ENCODE measurements at regions of chr5 and their contacts with region 1.

Region 1: GRCh38 chr5:71475788-71476384 is 20.4 kb downstream of the BDP1 start:
- DNase-seq: peak; percentile 52
- CTCF ChIP-seq: peak; percentile 56

Region 2: DNA sequence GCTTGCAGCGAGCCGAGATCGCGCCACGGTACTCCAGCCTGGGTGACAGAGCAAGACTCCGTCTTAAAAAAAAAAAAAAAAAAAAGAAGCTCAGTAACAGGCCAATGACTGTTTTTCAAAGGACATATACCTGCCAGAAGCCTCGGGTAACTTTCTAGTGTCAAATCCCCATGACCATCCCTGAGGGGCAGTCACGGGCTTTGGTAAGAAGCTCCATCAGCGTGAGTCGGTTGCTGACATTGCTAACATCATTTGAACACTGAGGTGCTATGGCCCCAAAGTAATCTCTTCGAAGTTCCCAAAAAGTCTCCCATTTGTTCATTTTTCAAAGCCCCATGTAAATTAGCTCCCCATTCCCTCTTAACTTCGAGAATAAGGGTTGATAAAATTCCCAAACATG is 462.3 kb before region 1 on chr5:
- CTCF ChIA-PET with region 1: no interaction called
- POLR2A ChIA-PET with region 1: no interaction called
- DNase-seq: no peak
- CTCF ChIP-seq: no peak

Region 3: DNA sequence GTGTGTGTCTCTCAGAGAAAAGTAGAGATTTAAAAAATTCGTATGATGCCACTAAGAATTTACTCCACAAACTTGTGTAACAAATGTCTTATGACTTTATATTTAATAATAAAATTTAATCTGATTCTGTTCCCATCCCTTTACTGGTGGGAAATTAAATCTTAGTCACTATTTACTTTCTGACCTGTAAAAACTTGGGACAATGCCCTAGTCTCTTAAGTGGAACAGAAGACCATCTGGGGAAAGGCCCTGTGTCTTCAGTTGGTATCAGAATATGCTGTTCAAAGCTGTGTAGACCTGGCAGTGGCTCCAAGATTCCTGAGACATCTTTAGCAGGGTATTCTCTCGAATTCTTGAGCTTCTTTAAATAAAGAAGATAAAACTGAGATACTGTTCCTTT is 23.0 kb before region 1 on chr5:
- CTCF ChIA-PET with region 1: interaction called, 10 read pairs
- POLR2A ChIA-PET with region 1: interaction called, 4 read pairs
- DNase-seq: no peak
- CTCF ChIP-seq: no peak

Region 4: DNA sequence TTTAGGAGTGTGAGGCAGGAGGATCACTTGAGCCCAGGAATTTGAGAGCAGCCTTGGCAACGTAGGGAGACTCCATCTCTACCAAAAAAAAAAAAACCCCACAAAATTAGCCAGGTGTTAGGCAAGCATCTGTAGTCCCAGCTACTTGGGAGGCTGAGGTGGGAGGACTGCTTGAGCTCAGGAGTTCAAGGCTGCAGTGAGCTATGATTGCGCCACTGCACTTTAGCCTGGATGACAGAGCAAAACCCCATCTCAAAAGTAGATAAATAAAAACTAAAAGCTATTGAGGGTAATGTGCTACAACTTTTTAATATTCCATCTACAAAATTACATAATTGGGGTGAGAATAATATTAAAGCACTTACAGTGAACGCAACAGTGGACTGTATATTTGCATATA is 14.5 kb before region 1 on chr5:
- CTCF ChIA-PET with region 1: interaction called, 35 read pairs
- POLR2A ChIA-PET with region 1: interaction called, 4 read pairs
- DNase-seq: no peak
- CTCF ChIP-seq: no peak

Region 5: DNA sequence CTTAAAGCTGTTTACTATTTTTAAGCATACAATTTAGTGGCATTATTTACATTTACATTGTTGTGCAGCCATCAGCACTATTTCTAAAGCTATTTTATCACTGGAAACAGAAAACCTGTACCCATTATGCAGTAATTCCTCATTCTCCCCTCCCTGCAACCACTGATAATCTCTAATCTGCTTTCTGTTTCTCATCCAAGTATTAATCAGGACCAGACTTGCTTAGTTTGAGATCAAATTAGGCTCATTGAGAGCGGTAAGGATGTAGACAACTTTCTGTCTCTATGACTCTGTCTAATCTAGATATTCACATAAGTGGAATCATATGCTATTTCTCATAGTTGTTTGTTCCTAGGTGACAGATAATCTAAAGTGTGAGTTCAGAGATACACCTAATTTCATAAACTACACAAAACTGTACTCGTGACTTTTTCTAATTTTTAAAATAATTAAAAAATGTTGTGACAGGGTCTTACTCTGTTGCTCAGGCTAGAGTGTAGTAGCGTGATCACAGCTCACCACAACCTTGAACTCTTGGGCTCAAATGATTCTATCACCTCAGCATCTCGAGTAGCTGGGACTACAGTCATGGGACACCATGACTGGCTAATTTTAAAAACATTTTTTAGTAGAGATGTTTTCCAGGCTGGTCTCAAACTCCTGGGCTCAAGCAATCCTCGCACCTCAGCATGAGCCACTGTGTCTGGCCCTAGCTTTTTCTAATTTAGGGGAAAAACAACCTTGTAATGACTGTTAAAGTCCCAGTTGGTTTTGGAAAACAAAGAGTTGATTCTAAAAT is 17.1 kb after region 1 on chr5:
- CTCF ChIA-PET with region 1: interaction called, 36 read pairs
- POLR2A ChIA-PET with region 1: no interaction called
- DNase-seq: no peak
- CTCF ChIP-seq: no peak

Region 6: DNA sequence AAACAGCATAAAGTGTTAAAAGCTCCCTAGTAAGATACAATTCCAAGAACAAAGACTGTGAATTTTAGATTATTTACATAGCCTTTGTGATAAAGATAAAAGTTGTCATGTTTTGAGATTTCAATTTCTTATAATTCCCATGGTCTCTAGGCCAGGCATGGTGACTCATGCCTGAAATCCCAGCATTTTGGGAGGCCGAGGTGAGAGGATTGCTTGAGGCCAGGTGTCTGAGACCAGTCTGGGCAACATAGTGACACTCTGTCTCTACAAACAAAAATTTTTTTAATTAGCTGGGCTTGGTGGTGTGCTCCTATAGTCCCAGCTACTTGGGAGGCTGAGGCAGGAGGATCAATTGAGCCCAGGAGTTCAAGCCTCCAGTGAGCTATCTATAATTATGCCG is 27.6 kb after region 1 on chr5:
- CTCF ChIA-PET with region 1: interaction called, 11 read pairs
- POLR2A ChIA-PET with region 1: no interaction called
- DNase-seq: no peak
- CTCF ChIP-seq: no peak

Region 7: DNA sequence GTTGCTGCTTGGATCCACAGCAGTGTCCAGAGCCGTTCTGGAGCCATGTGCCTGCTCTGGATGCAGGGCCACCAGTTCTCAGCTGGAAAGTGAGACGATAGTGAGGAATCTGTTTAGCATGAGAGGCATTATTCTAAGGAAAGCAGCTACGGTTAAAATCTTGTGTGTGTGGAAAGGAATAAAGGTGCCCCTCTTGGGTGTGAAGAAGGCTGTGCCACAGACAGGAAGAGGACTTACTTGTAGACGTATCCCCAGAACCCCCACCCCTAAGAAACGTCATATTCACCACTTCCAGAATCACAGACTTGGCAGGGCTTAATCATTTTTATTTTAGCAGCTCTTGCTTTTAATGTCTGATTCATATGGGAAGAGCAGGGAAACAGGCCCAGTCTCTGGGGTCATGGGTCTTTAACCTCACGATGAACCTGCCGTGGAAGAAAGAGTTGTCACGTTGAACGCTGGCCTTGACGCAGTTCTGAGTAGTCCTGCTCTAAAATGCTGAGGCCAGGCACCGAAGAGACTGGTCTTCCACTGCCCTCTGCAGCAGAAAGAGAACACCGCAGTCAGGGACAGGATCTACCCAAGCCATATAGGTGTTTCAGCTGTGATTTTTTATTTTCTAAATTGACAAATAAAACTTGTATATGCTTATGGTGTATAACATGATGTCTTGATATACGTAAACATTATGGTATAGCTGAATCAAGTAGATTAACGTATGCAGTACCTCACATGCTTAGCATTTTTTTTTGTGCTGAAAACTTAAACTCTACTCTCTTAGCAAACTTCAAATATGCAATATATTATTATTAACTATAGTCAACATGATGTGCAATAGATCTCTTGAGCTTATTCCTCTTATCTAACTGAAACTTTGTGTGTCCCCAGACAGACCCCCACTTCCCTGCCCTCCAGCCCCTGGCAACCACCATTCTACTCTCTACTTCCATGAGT is 282.0 kb after region 1 on chr5:
- CTCF ChIA-PET with region 1: interaction called, 32 read pairs
- POLR2A ChIA-PET with region 1: no interaction called
- DNase-seq: peak; percentile 49
- CTCF ChIP-seq: peak; percentile 80

Measured in GM10248 (cell line).